HEK293 (cell line): ENCODE measurements at regions of chr1 and their contacts with region 1.

Region 1: DNA sequence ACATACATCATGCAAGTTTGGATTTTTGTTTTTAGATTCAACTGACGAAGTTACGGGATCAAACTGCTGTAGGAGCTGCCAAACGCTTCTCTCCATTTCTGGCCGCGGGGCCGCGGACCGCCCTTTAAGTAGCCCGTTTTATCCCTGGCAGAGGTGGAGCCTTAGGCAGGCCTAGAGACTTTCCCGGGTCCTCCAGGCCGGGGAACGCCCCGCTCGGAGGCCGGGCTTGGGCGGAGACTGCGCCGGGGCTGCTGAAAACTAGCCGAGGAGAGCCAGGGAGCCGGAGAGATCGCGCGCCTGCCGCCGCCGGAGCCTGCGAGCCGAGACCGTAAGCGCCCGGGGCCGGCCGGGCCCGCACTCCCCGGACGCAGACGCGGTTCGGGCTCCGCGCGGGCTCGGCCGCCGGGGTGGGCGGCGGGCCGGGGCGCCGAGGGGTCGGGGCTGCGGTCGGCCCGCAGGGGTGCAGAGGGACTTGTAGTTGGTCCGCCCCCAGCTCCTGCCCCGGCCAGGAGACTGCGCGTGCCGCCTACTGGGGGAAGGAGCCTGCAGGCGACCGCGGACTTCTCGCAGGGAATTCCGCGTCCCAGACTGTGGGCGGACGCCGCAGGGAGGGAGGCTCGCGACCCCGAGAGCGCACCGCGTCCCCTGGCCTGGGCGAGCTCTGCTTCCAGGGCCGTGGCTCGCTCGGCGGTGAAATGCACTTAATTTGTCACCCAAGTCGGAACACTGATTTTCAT is at the start of gene EPHX1:
- H3K4me3 ChIP-seq: peak within 1 kb of the TSS; percentile 64
- H3K27ac ChIP-seq: peak within 1 kb of the TSS; percentile 61
- H3K4me1 ChIP-seq: peaks cover 20% of the 10 kb centered on the region
- CTCF ChIP-seq: peak; percentile 88

Region 2: DNA sequence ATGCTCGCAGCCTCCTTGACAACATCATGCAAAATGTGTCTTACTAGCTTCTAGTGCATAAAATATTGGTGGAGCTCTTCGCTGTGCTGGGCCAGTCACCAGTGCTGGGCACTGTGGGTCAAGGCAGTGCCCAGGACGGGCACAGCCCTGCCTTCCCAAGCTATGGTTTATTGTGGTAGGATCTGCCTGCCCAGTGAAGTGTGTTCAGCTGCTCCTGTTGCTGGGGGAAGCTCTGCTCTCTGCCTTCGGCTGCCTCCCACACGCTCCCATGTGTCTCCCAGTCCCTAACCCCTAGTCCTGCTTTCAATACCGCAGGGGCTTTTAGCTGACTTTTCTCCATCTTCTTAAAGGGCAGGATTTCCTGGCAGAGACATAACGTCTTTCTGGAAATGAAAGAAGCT is 15.6 kb after region 1 on chr1:
- CTCF ChIA-PET with region 1: interaction called, 15 read pairs
- POLR2A ChIA-PET with region 1: interaction called, 3 read pairs
- H3K4me3 ChIP-seq: no peak overlapping the region
- H3K27ac ChIP-seq: no peak overlapping the region
- H3K4me1 ChIP-seq: no peaks in the 10 kb centered on the region
- CTCF ChIP-seq: no peak